ENCODE measurements at regions of chr18 and their contacts with region 1.

Region 1: GRCh38 chr18:75209129-75209950 is at the start of gene PTGR3:
- DNase-seq: peak; percentile 81
- H3K4me3 ChIP-seq: peak within 1 kb of the TSS; percentile 79 to 98 (median 88)
- H3K27ac ChIP-seq: peak within 1 kb of the TSS; percentile 74
- H3K4me1 ChIP-seq: peaks cover 36% of the 10 kb centered on the region
- H3K27me3 ChIP-seq: no peaks in the 10 kb centered on the region
- CTCF ChIP-seq: no peak
- total RNA-seq, gene PTGR3: 15.2 to 29.4 TPM

Region 2: GRCh38 chr18:75070625-75071483 is 138.5 kb before region 1 on chr18:
- CTCF ChIA-PET with region 1: no interaction called
- dilution Hi-C with region 1: no loop called
- in situ Hi-C with region 1: no loop called
- intact Hi-C with region 1: loop called (anchors 2 kb)
- DNase-seq: peak; percentile 90
- H3K4me3 ChIP-seq: no peak overlapping the region
- H3K27ac ChIP-seq: peak overlapping the region; percentile 27
- H3K4me1 ChIP-seq: peaks cover 23% of the 10 kb centered on the region
- H3K27me3 ChIP-seq: no peaks in the 10 kb centered on the region
- CTCF ChIP-seq: no peak

Region 3: GRCh38 chr18:75183531-75183930 is 25.8 kb before region 1 on chr18:
- CTCF ChIA-PET with region 1: no interaction called
- dilution Hi-C with region 1: no loop called
- in situ Hi-C with region 1: no loop called
- intact Hi-C with region 1: loop called (anchors 2 kb)
- DNase-seq: peak; percentile 90
- H3K4me3 ChIP-seq: no peak overlapping the region
- H3K27ac ChIP-seq: no peak overlapping the region
- H3K4me1 ChIP-seq: peaks cover 14% of the 10 kb centered on the region
- H3K27me3 ChIP-seq: no peaks in the 10 kb centered on the region
- CTCF ChIP-seq: no peak

Region 4: DNA sequence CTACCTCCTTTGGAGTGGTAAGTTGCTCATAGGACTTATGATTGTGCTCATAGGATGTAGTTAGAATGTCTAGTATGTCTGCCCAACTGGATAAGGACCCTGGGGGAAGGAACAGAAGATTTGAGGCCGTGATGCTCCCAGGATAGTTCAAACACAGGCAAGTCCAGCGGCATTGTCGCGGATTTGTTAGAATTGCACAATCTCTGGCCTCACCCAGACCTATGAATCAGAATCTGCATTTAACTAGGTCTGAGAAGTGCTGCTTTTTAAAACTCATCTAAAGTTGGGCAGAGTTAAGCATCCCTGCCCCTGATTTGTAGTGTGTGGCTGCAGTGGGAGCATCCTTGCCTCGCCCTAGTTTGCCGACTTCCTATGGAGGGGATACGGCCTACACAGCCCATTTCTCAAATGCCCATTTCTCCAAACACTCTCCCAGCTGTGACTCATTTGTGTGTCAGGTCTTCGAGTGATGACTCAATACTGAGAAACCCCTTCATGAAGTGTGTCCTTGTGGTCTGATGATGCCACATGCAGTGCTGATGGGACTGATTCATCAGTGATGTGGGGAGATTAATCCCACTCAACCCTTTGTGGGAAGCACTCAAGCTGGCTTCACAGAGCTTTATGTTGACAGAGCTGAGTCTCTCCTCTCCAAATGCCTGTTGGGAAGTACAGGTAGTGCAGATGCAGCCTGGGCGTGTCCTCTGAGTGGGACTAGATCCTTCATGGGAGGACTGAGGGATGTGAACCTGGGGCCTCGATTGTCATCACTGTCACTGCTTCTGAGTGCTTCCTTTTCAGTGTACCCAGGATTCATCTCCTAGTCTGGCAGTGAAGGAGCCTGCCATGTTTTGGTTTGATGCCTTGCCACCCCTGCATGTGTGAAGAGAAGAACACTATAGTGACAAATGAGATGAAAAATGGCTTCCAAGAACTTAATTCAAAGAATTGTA is 199.5 kb after region 1 on chr18:
- CTCF ChIA-PET with region 1: no interaction called
- dilution Hi-C with region 1: no loop called
- in situ Hi-C with region 1: no loop called
- intact Hi-C with region 1: loop called (anchors 2 kb)
- DNase-seq: peak; percentile 100
- H3K4me3 ChIP-seq: no peak overlapping the region
- H3K27ac ChIP-seq: peak overlapping the region; percentile 76
- H3K4me1 ChIP-seq: peaks cover 29% of the 10 kb centered on the region
- H3K27me3 ChIP-seq: no peaks in the 10 kb centered on the region
- CTCF ChIP-seq: no peak

Region 5: DNA sequence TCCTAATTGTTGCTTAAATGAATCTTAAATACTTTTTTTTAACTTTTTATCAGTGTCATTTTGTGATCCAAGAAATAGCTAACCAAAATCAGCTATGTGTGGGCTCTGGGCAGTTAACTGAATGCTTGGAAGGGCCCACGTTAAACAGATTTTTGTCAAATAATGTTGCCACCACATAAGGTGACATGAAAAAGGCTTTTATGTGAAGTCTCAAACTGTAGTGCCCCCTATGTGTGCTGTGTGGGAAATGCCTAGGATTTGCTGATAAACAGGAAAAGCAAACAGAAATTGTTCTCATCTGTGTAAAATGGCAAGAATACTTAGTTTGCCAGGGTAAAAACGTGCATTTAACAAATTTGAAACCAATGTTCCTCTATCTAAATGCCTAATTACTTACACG is 1043.5 kb after region 1 on chr18:
- CTCF ChIA-PET with region 1: no interaction called
- dilution Hi-C with region 1: no loop called
- in situ Hi-C with region 1: no loop called
- intact Hi-C with region 1: loop called (anchors 5 kb)
- DNase-seq: no peak
- H3K4me3 ChIP-seq: no peak overlapping the region
- H3K27ac ChIP-seq: no peak overlapping the region
- H3K4me1 ChIP-seq: no peaks in the 10 kb centered on the region
- H3K27me3 ChIP-seq: no peaks in the 10 kb centered on the region
- CTCF ChIP-seq: peak; percentile 63 to 70